ENCODE measurements at regions of chr7 and their contacts with region 1.

Region 1: GRCh38 chr7:116929914-116930913 is 23.1 kb upstream of the ST7 start:
- DNase-seq: peak; percentile 91
- ATAC-seq: peak; percentile 96
- H3K4me3 ChIP-seq: peak overlapping the region; percentile 40; the same call in 1 of the 2 replicates
- H3K27ac ChIP-seq: no peak overlapping the region
- H3K4me1 ChIP-seq: peaks cover 7% of the 10 kb centered on the region; the same call in 1 of the 2 replicates
- H3K27me3 ChIP-seq: no peaks in the 10 kb centered on the region
- CTCF ChIP-seq: peak; percentile 91

Region 2: GRCh38 chr7:116671681-116672595 is 258.3 kb before region 1 on chr7 and contains the start of gene MET:
- CTCF ChIA-PET with region 1: no interaction called
- POLR2A ChIA-PET with region 1: no interaction called
- intact Hi-C with region 1: no loop called
- DNase-seq: peak; percentile 90
- ATAC-seq: peak; percentile 76
- H3K4me3 ChIP-seq: peak within 1 kb of the TSS; percentile 99
- H3K27ac ChIP-seq: peak within 1 kb of the TSS; percentile 93
- H3K4me1 ChIP-seq: peaks cover 28% of the 10 kb centered on the region
- H3K27me3 ChIP-seq: no peaks in the 10 kb centered on the region
- CTCF ChIP-seq: peak; percentile 71
- total RNA-seq, gene MET: 109 and 118 TPM in 2 replicates

Region 3: GRCh38 chr7:116786791-116787443 is 143.3 kb before region 1 on chr7:
- CTCF ChIA-PET with region 1: no interaction called
- POLR2A ChIA-PET with region 1: no interaction called
- intact Hi-C with region 1: no loop called
- DNase-seq: peak; percentile 76
- ATAC-seq: peak; percentile 65
- H3K4me3 ChIP-seq: no peak overlapping the region
- H3K27ac ChIP-seq: no peak overlapping the region
- H3K4me1 ChIP-seq: peaks cover 23% of the 10 kb centered on the region
- H3K27me3 ChIP-seq: no peaks in the 10 kb centered on the region
- CTCF ChIP-seq: peak; percentile 67

Region 4: DNA sequence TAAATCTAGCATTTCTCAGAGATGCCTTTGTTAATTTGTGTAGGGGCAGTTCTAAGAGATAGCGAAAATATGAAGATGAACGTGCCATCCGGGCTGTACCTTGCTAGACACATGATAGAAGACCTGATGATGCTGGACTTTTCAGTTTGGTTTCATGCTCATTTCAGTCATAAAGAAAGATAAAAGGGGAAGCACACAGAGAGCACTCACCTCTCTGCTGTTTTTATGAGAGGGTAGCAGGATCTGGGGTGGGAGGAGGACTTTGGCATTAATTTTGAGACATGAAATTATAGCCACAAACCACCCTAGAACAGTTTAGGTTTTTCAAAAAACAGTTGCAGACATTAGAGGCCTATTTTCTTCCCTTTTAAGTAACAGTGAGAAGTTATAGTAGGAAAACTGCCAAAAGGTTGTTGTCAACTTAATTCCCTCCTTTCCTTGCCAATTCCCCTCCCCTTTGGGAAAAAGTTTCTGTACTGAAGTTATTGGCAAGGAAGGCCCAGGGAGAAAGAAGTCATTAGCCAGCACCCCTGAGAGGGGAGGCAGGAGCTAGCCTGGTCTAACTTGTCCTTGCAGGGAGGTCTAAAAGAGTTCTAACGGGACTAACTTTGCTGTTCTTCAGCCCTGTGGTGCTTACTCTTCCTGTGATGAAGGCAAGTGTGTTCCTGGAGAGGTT is 25.7 kb after region 1 on chr7:
- CTCF ChIA-PET with region 1: interaction called, 3 read pairs
- POLR2A ChIA-PET with region 1: interaction called, 11 read pairs
- intact Hi-C with region 1: no loop called
- DNase-seq: no peak
- ATAC-seq: no peak
- H3K4me3 ChIP-seq: peak overlapping the region; percentile 76; the same call in 1 of the 2 replicates
- H3K27ac ChIP-seq: no peak overlapping the region
- H3K4me1 ChIP-seq: peaks cover 28% of the 10 kb centered on the region
- H3K27me3 ChIP-seq: no peaks in the 10 kb centered on the region
- CTCF ChIP-seq: no peak

Region 5: DNA sequence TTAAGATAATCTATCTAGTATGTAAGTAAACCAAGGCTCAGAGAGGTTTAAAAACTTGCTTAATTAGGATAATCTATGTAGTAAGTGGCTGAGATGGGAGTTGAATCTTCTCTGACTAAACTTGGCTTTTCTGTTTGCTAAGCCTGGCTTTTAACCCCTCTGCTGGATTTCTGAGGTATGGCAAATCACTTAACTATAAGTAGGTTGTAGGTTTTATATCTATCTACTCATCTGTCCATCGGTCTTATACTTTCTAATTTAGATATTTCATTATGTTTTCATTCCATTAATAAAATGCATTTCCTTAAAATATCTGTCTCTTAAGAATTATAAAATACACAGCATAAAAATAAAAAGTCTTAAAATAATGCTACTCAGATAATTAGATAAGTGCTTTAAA is 82.5 kb after region 1 on chr7:
- CTCF ChIA-PET with region 1: no interaction called
- POLR2A ChIA-PET with region 1: interaction called, 3 read pairs
- intact Hi-C with region 1: loop called (anchors 1 kb)
- DNase-seq: peak; percentile 66
- ATAC-seq: peak; percentile 65
- H3K4me3 ChIP-seq: no peak overlapping the region
- H3K27ac ChIP-seq: no peak overlapping the region
- H3K4me1 ChIP-seq: peaks cover 24% of the 10 kb centered on the region
- H3K27me3 ChIP-seq: no peaks in the 10 kb centered on the region
- CTCF ChIP-seq: peak; percentile 55

Region 6: DNA sequence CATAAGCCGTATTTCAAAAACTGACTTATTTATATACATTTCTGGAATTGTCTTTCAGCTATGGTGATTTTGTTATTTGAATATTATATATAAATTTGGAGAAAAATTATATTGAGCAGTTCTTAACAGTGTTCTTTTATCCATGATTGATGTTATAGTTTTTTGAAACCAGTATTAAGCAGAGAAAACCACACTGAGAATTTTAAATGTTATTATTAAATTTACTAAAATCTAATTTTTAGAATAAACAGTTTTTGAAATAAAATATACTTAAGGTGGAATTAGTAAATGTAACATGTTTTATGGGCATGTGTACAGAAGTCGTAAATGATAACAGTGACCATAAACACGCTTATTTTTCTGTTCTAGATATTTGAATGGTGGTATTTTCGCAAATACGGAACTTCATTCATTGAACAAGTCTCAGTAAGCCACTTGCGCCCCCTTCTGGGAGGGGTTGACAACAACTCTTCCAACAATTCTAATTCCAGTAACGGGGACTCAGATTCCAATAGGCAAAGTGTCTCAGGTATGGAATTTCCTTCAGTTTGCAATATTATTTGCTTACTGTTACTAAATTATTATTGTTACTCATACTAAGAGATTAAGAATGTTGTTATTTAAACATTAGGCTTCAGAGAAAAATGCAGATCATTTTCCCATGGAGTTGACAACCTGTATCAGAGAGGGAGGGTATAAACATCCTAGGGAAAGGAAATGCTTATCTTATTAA is 189.1 kb after region 1 on chr7:
- CTCF ChIA-PET with region 1: no interaction called
- POLR2A ChIA-PET with region 1: no interaction called
- intact Hi-C with region 1: loop called (anchors 1 kb)
- DNase-seq: peak; percentile 87
- ATAC-seq: peak; percentile 27
- H3K4me3 ChIP-seq: no peak overlapping the region
- H3K27ac ChIP-seq: no peak overlapping the region
- H3K4me1 ChIP-seq: peaks cover 39% of the 10 kb centered on the region
- H3K27me3 ChIP-seq: no peaks in the 10 kb centered on the region
- CTCF ChIP-seq: peak; percentile 89

Region 7: DNA sequence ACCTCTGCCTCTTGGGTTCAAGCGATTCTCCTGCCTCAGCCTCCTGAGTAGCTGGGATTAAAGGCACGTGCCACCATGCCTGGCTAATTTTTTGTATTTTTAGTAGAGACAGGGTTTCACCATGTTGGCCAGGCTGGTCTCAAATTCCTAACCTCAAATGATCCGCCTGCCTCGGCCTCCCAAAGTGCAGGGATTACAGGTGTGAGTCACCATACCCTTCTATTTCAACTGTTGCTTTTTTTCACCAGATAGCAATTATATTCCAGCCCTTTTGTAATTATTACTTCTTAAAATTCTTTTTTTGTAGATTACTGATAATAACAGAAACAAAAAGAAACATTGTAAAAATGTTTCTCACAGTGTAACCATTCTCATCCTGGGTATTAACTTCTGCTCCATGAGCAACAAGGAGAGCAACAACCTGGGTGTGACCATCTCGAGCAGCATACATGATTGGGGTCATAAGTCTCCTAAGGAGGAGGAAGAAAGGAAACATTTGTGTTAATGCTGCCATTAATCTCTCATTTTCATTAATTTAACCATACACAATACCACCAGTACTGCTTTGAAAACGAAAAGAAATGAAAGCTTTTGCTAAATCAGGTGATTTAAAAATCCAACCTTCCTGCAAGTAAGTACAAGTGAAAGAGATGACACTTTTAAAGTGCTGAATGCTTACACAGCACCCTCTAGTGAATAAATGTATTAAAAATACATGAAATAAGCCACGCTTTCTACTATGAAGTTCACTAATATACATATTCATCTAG is 455.3 kb after region 1 on chr7:
- CTCF ChIA-PET with region 1: no interaction called
- POLR2A ChIA-PET with region 1: no interaction called
- intact Hi-C with region 1: loop called (anchors 2 kb)
- DNase-seq: peak; percentile 51
- ATAC-seq: peak; percentile 84
- H3K4me3 ChIP-seq: no peak overlapping the region
- H3K27ac ChIP-seq: no peak overlapping the region
- H3K4me1 ChIP-seq: no peaks in the 10 kb centered on the region
- H3K27me3 ChIP-seq: peaks cover 16% of the 10 kb centered on the region; the same call in 1 of the 2 replicates
- CTCF ChIP-seq: peak; percentile 72

Measured in PC-3 (cell line).